Mammary epithelial cell (primary cell): ENCODE measurements at regions of chr5 and their contacts with region 1.

Region 1: GRCh38 chr5:132753135-132753987 is 6.1 kb downstream of the CCNI2 start:
- DNase-seq: peak; percentile 24
- H3K4me3 ChIP-seq: no peak overlapping the region
- H3K27ac ChIP-seq: no peak overlapping the region
- H3K4me1 ChIP-seq: no peaks in the 10 kb centered on the region
- H3K27me3 ChIP-seq: no peaks in the 10 kb centered on the region
- CTCF ChIP-seq: peak in 1 of 2 donors; percentile 47

Region 2: DNA sequence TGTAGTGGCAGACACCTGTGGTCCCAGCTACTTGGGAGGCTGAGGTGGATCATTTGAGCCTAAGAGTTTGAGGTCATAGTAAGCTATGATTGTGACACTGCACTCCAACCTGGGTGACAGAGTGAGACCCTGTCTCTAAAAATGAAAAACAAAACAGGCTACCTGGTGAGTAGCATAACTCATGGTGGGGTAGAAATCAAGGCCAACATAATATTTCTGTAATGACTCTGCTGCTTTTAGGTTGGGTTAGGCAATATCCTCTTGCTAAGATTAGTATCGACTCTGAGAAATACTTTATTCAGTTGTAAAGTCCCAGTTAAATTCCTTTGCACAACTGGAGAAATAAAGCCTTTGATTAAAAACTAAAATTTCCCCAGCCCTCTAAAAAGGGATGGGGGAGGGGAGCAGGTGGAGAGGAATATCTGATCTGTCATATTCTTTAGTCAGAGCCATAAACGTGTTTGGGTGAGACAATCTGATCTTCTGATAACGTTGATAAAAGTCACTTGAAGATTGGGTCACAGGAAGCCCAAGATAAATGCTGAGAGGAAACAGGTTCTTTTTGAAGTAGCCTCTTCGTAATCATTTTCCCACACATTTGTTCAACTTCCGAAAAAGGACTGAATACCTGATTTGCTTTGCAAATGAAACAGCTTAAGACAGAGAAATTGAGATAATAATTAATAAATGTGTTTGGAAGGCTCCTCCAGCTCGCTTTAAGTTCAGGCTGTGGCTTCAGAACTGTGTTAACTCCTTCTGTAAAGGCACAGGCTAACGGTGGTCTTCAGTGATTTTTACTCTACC is 64.6 kb before region 1 on chr5:
- CTCF ChIA-PET with region 1: no interaction called
- dilution Hi-C with region 1: loop called (anchors 5 kb)
- in situ Hi-C with region 1: no loop called
- intact Hi-C with region 1: no loop called
- DNase-seq: no peak
- H3K4me3 ChIP-seq: no peak overlapping the region
- H3K27ac ChIP-seq: no peak overlapping the region
- H3K4me1 ChIP-seq: no peaks in the 10 kb centered on the region
- H3K27me3 ChIP-seq: no peaks in the 10 kb centered on the region
- CTCF ChIP-seq: no peak

Region 3: GRCh38 chr5:132737982-132738681 is 15.2 kb before region 1 on chr5:
- CTCF ChIA-PET with region 1: no interaction called
- dilution Hi-C with region 1: no loop called
- in situ Hi-C with region 1: no loop called
- intact Hi-C with region 1: no loop called
- DNase-seq: no peak
- H3K4me3 ChIP-seq: peak overlapping the region in 2 of 3 experiments; percentile 91 to 95
- H3K27ac ChIP-seq: peak overlapping the region; percentile 66
- H3K4me1 ChIP-seq: peaks cover 24% of the 10 kb centered on the region
- H3K27me3 ChIP-seq: no peaks in the 10 kb centered on the region
- CTCF ChIP-seq: no peak